ENCODE measurements at regions of chr1 and their contacts with region 1.

Region 1: GRCh38 chr1:26529655-26530409 is at the start of gene RPS6KA1:
- DNase-seq: peak in 32 of 35 experiments; percentile 19 to 80 (median 42)
- ATAC-seq: peak; percentile 93 to 96 (median 94)
- H3K4me3 ChIP-seq: peak within 1 kb of the TSS; percentile 69 to 71
- H3K4me3 Mint-ChIP-seq: peak within 1 kb of the TSS; percentile 85 to 90 (median 89)
- H3K27ac ChIP-seq: peak within 1 kb of the TSS; percentile 18
- H3K27ac Mint-ChIP-seq: peak within 1 kb of the TSS; percentile 70 to 81
- H3K4me1 ChIP-seq: peaks cover 10 to 39% of the 10 kb centered on the region in 2 experiments
- H3K4me1 Mint-ChIP-seq: peaks cover 28 to 36% (median 29%) of the 10 kb centered on the region in 3 donors
- H3K27me3 ChIP-seq: peaks cover 0 to 3% of the 10 kb centered on the region in 2 experiments
- H3K27me3 Mint-ChIP-seq: peaks cover 0 to 2% of the 10 kb centered on the region in 2 donors
- total RNA-seq, gene RPS6KA1: 85.8 to 123 (median 101) TPM

Region 2: GRCh38 chr1:26516987-26517765 is 12.7 kb before region 1 on chr1:
- CTCF ChIA-PET with region 1: no interaction called
- POLR2A ChIA-PET with region 1: interaction called in 1 of 2 experiments, 10 read pairs
- DNase-seq: no peak
- ATAC-seq: no peak
- H3K4me3 ChIP-seq: no peak overlapping the region
- H3K4me3 Mint-ChIP-seq: no peak overlapping the region
- H3K27ac ChIP-seq: no peak overlapping the region
- H3K27ac Mint-ChIP-seq: no peak overlapping the region
- H3K4me1 ChIP-seq: no peaks in the 10 kb centered on the region
- H3K4me1 Mint-ChIP-seq: no peaks in the 10 kb centered on the region
- H3K27me3 ChIP-seq: peaks cover 0 to 6% of the 10 kb centered on the region in 2 experiments
- H3K27me3 Mint-ChIP-seq: no peaks in the 10 kb centered on the region

Region 3: GRCh38 chr1:27010989-27011764 is 481.3 kb after region 1 on chr1:
- CTCF ChIA-PET with region 1: no interaction called
- POLR2A ChIA-PET with region 1: interaction called in 1 of 2 experiments, 12 read pairs
- DNase-seq: no peak
- ATAC-seq: no peak
- H3K4me3 ChIP-seq: no peak overlapping the region
- H3K4me3 Mint-ChIP-seq: peak overlapping the region in 2 of 3 donors; percentile 47 to 77
- H3K27ac ChIP-seq: no peak overlapping the region
- H3K27ac Mint-ChIP-seq: no peak overlapping the region
- H3K4me1 ChIP-seq: peaks cover 0 to 11% of the 10 kb centered on the region in 2 experiments
- H3K4me1 Mint-ChIP-seq: peaks cover 5 to 11% (median 6%) of the 10 kb centered on the region in 3 donors
- H3K27me3 ChIP-seq: peaks cover 8 to 55% of the 10 kb centered on the region in 2 experiments
- H3K27me3 Mint-ChIP-seq: peaks cover 6 to 37% of the 10 kb centered on the region in 2 donors

Measured in T-cell (primary cell).